OCI-LY7 (cell line): ENCODE measurements at regions of chr9 and their contacts with region 1.

Region 1: DNA sequence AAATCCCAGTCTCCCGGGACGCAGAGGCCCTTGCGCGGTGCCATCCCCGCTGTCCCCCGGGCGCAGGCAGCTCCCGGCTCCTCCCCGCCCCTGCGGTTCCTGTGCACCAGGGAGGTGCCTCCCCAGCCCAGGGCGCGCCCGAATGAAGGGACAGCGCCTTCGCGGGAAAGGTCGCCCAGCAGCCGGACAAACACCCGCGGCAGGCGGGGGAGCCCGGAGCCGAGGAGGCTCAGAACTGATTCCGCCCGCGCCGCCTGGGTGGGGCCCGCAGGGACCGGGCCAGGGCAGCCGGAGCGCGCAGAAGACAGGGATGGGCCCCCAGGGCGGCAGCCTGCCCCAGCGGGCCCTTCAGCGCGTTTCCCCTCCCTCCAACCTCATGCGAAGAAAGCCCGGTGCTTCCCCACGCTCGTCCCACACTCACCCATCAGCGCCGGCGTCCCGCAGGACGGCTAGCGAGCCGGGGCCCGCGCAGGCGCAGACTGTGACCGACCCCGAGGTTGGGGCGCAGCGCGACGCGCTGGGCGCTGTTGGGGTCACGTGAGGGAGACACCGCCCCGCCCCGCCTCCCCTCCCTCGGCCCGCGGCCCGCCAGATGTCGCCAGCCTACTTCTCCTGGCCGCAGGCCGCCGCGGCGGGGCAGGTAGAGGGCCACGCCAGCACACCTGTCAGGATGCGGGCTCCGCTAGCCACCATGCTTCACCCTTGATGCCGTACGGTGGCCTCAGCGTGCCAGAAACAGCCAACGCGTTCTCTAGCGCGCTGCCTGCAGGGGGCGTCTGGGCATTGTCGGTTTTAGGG is at the start of gene SLC25A51:
- DNase-seq: peak; percentile 97
- H3K4me3 ChIP-seq: peak within 1 kb of the TSS; percentile 94
- H3K27ac ChIP-seq: peak within 1 kb of the TSS; percentile 73
- H3K4me1 ChIP-seq: peaks cover 24% of the 10 kb centered on the region
- CTCF ChIP-seq: peak; percentile 92
- total RNA-seq, gene SLC25A51: 20.1 and 31.8 TPM in 2 replicates

Region 2: GRCh38 chr9:37611961-37612360 is 291.9 kb before region 1 on chr9:
- CTCF ChIA-PET with region 1: no interaction called
- POLR2A ChIA-PET with region 1: no interaction called
- intact Hi-C with region 1: no loop called
- DNase-seq: no peak
- H3K4me3 ChIP-seq: no peak overlapping the region
- H3K27ac ChIP-seq: no peak overlapping the region
- H3K4me1 ChIP-seq: no peaks in the 10 kb centered on the region
- CTCF ChIP-seq: no peak

Region 3: DNA sequence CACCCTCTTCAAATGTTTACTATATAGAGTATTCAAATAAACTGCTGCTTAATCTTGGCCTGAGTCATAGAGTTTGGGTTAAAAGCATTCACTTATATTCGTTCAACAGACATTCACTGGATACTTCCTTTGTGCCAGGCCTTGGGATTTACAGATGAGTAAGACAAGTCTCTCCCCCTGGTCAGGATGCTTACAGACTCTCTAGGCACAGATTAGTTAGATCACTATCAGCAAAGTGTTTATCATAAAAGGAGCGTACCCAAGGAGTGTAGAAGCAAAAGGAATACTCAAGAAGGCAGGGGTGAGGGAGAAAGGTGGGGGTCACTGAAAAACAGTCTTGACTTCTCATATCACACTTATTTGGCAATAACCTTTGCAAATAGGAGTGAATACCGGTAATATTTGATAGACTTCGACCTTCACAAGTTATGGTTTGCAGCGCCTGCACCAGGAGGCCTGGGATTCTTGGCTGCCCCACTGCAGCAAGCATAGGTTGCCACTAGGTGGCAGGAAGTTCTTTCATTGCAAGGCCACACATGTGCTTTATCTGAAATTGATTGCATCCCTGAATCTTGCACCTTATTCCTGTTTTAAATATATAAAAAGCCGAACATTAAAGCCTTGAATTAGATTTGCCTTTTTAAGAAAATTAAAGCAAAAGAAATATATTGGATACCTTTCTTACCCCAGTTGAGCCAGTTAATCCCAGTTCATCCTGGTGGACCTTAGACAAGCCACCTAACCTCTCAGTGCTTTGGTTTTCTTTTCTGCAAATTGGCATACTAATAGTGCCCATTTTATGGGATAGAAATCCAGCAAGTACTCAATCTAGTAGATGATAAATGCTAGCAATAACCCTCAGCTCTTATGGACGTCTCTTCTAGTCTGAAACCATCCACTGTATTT is 156.7 kb before region 1 on chr9:
- CTCF ChIA-PET with region 1: no interaction called
- POLR2A ChIA-PET with region 1: no interaction called
- intact Hi-C with region 1: loop called (anchors 1 kb)
- DNase-seq: peak; percentile 75
- H3K4me3 ChIP-seq: no peak overlapping the region
- H3K27ac ChIP-seq: no peak overlapping the region
- H3K4me1 ChIP-seq: no peaks in the 10 kb centered on the region
- CTCF ChIP-seq: peak; percentile 99

Region 4: DNA sequence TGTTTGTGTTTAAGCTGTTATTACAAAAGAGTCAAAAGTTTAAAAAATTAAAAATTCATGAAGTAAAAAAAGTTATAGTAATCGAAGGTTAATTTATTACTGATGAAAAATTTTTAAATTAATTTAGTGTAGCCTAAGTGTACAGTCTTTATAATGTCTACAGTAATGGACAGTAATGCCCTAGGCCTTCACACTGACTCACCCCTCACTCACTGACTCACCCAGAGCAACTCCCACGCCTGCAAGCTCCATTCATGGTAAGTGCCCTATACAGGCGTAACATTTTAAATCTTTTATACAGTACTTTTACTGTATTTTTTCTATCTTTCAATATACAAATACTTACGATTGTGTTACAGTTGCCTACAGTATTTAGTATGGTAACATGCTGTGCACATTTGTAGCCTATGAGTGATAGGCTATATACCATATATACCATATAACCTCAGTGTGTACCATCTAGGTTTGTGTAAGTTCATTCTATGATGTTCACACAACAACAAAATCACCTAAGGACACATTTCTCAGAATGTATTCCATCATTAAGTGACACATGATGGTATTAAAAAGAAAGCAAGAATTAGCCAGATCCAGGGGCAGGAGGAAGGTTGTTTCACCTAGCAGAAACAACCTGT is 63.2 kb before region 1 on chr9:
- CTCF ChIA-PET with region 1: no interaction called
- POLR2A ChIA-PET with region 1: no interaction called
- intact Hi-C with region 1: loop called (anchors 10 kb)
- DNase-seq: no peak
- H3K4me3 ChIP-seq: no peak overlapping the region
- H3K27ac ChIP-seq: no peak overlapping the region
- H3K4me1 ChIP-seq: no peaks in the 10 kb centered on the region
- CTCF ChIP-seq: no peak